HEK293 (cell line): ENCODE measurements at regions of chr11 and their contacts with region 1.

Region 1: DNA sequence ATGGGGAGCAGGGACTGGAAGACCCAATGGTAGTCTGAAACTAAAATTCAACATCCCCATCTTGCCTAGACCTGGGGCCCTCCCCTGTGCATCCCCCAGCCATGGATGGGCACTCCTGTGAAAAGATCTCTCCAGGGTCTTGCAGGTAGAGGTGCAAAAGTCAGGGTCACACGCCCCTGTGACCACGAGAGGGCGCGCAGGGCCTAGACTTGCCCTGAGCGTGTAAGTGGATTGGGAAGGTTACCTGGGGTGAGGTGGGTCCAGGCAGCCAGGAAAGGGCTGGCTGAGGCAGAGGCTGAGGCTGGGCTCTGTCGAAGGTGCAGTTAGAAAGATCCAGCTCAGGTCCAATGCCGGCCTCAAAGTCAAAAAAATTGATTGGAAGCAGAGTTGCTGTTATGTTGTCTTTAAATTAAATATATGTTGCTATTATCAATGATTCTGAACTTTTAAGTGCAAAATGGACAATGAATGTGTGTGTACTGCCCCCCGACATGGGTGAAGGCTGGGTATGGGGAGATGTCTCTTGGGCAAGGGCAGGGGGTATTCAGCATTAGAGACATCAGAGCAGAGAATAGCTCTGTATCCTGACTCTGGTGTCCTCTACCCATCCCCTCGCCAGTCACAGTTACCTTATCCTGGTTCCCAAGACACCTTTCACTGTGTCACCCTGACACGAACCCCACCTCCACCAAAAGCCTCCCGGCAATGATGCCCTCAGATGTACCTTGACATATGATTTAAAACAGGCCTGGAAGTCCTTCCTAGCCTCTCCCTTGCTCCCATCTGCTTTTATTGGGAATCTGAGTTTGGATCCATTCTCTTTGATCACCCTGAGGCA is 4.7 kb upstream of the POU2F3 start:
- H3K4me3 ChIP-seq: no peak overlapping the region
- H3K27ac ChIP-seq: no peak overlapping the region
- H3K4me1 ChIP-seq: no peaks in the 10 kb centered on the region
- CTCF ChIP-seq: peak; percentile 75

Region 2: DNA sequence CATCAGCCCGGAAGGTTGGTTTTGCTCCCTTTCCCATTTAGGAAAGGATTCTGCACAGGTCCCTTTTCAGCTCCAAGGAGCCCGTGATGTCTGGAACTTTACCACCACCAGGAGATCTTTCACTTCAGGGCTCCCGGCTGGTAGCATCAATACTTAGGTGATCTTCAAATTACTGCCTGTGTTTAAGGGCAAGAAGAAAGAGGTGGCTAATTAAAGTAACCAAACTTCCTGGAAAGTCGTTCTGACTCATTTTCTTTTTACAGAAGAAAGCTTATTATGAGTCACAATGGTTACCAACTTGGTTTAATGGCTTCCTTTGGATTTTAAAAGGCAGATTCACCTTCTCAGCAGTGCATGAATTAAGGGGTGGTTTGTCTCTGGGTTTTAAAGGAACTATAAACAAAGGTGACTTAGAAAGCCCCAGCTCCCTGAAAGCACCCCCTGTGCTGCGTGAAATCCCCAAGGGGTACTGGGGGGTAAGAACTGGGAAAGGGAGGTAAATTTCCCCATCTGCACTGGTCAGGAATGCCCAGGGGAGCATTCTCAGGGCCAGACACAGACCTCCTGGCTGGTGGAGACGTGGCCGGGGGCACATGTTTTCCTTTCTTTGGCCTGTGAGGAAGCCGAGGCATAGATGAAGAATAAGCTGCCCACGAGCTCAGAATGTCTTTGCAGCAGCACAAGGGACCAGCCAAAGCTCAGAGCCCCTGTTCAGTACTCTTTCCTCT is 13.5 kb after region 1 on chr11:
- CTCF ChIA-PET with region 1: interaction called, 37 read pairs
- POLR2A ChIA-PET with region 1: no interaction called
- H3K4me3 ChIP-seq: no peak overlapping the region
- H3K27ac ChIP-seq: no peak overlapping the region
- H3K4me1 ChIP-seq: no peaks in the 10 kb centered on the region
- CTCF ChIP-seq: no peak

Region 3: DNA sequence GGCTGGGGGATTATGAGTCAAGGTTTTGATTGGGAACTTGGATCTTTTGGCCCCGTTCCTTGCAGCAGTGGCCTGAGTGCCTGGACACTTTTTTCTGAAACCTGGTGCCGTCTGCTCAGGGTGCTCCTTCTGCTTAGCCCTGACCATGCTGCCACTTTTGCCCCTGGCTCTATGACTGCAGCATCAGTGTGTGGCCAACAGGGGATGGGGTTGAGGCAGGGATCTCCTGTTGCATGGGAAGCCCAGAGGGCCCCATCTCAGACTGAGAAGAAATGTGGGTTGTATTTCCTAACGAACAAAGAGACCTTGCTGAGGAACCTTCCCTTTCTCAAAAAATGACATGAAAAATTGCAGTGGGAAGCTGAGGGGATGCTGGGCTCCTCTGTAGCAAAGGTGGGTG is 23.4 kb after region 1 on chr11:
- CTCF ChIA-PET with region 1: interaction called, 10 read pairs
- POLR2A ChIA-PET with region 1: no interaction called
- H3K4me3 ChIP-seq: no peak overlapping the region
- H3K27ac ChIP-seq: no peak overlapping the region
- H3K4me1 ChIP-seq: no peaks in the 10 kb centered on the region
- CTCF ChIP-seq: no peak

Region 4: DNA sequence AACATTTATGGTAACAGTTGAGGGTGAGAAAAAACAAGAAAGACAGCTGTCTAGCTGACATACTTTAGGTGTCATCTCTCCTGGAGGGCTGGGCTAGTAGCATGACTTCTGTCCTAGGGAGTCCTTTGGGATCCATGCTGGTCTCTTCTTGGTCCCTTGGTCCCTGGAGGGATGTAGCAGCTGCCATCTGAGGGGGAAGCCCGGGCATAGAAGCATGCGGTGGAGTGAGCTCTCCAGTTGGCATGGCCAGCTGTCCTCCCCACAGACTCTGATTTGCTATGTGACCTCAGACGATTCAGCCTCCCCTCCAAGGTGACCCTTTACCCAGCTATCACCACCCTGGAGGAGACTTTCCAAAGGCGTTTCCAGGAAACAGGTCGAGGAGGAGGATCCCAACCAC is 33.4 kb after region 1 on chr11:
- CTCF ChIA-PET with region 1: interaction called, 17 read pairs
- POLR2A ChIA-PET with region 1: no interaction called
- H3K4me3 ChIP-seq: no peak overlapping the region
- H3K27ac ChIP-seq: no peak overlapping the region
- H3K4me1 ChIP-seq: no peaks in the 10 kb centered on the region
- CTCF ChIP-seq: no peak